Sciatic nerve (tissue), 2 donors: ENCODE measurements at regions of chr7 and their contacts with region 1.

Region 1: DNA sequence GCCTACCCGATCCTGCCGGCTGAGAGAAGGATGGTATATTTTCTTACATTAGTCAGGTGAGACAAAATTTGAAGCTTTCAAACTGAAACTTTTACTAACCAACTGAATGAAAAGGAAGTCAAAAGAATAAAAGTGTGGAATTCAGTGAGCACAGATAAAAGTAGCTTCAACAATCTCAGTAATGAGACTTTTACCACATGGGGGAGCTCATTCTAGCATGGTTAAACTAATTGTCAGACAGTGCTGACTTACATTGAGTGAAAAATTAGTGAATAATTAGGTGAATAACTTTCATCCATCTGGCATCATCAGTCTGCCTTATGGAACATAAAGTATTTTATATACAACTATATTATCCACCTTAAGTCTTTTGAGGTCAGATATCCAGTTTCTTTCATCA is 8.4 kb downstream of the FAM237B start:
- DNase-seq: no peak
- ATAC-seq: no peak

Region 2: GRCh38 chr7:90276033-90276728 is 36.6 kb before region 1 on chr7:
- intact Hi-C with region 1: no loop called
- DNase-seq: no peak
- ATAC-seq: no peak

Region 3: DNA sequence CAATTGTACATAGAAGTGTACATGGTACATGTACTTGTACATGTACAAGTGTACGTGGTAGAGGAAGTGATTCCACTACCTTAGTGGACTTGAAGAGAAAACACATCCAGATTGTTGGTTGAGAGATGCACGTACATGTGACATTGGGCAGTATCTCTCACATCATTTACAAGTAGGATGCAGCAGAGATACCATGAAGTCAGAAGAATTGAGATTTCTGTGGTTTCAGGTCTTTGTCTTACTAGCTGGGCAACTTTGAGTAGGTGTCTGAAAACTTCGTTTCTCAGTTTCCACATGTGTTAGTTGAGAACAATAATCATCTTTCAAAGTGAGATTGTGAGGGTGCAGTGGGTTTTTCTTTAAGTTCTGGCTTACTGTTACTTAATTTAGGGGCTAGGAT is 112.0 kb after region 1 on chr7:
- intact Hi-C with region 1: loop called (anchors 10 kb)
- DNase-seq: no peak
- ATAC-seq: no peak